T-cell (primary cell): ENCODE measurements at regions of chr3 and their contacts with region 1.

Region 1: GRCh38 chr3:187738331-187739093 is 6.8 kb downstream of the BCL6 start:
- DNase-seq: peak in 32 of 35 experiments; percentile 25 to 85 (median 58)
- ATAC-seq: peak; percentile 41 to 53 (median 48)
- H3K4me3 ChIP-seq: peak overlapping the region; percentile 93 to 97
- H3K4me3 Mint-ChIP-seq: peak overlapping the region; percentile 95 to 98 (median 98)
- H3K27ac ChIP-seq: peak overlapping the region; percentile 98
- H3K27ac Mint-ChIP-seq: peak overlapping the region; percentile 90 to 100
- H3K4me1 ChIP-seq: peaks cover 17 to 60% of the 10 kb centered on the region in 2 experiments
- H3K4me1 Mint-ChIP-seq: peaks cover 51 to 62% (median 53%) of the 10 kb centered on the region in 3 donors
- H3K27me3 ChIP-seq: no peaks in the 10 kb centered on the region
- H3K27me3 Mint-ChIP-seq: no peaks in the 10 kb centered on the region

Region 2: DNA sequence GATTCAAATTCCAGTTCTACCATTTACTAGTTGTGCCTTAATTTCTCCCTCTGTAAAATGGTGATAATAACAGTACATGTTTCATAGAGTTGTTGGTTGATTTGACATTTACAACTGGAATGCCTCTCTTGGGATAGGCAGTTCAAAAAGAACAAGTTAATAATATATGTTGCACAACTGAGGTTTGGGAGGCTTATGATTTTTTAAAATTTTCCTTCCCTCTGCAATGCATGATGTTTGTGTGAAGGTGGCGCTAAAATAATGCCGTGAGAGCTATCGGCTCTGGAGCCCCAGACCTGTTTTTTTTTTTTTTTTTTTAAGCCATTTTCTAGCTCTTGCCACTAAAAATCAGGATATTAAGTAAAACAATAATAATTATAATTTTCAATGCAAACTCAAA is 1149.4 kb before region 1 on chr3:
- CTCF ChIA-PET with region 1: no interaction called
- POLR2A ChIA-PET with region 1: no interaction called
- DNase-seq: no peak
- ATAC-seq: no peak
- H3K4me3 ChIP-seq: no peak overlapping the region
- H3K4me3 Mint-ChIP-seq: no peak overlapping the region
- H3K27ac ChIP-seq: no peak overlapping the region
- H3K27ac Mint-ChIP-seq: no peak overlapping the region
- H3K4me1 ChIP-seq: no peaks in the 10 kb centered on the region
- H3K4me1 Mint-ChIP-seq: peaks cover 8 to 25% (median 23%) of the 10 kb centered on the region in 3 donors
- H3K27me3 ChIP-seq: no peaks in the 10 kb centered on the region
- H3K27me3 Mint-ChIP-seq: no peaks in the 10 kb centered on the region

Region 3: GRCh38 chr3:187979564-187979963 is 241.1 kb after region 1 on chr3:
- CTCF ChIA-PET with region 1: interaction called, 4 to 11 read pairs
- POLR2A ChIA-PET with region 1: interaction called in 1 of 2 experiments, 3 read pairs
- DNase-seq: peak in 33 of 35 experiments; percentile 11 to 66 (median 40)
- ATAC-seq: peak; percentile 75 to 90 (median 84)
- H3K4me3 ChIP-seq: no peak overlapping the region
- H3K4me3 Mint-ChIP-seq: peak overlapping the region in 1 of 3 donors; percentile 66
- H3K27ac ChIP-seq: peak overlapping the region; percentile 40
- H3K27ac Mint-ChIP-seq: peak overlapping the region; percentile 87 to 88
- H3K4me1 ChIP-seq: peaks cover 35 to 41% of the 10 kb centered on the region in 2 experiments
- H3K4me1 Mint-ChIP-seq: peaks cover 54 to 59% (median 58%) of the 10 kb centered on the region in 3 donors
- H3K27me3 ChIP-seq: no peaks in the 10 kb centered on the region
- H3K27me3 Mint-ChIP-seq: no peaks in the 10 kb centered on the region

Region 4: GRCh38 chr3:188740010-188740409 is 1001.5 kb after region 1 on chr3:
- CTCF ChIA-PET with region 1: interaction called, 11 to 111 read pairs
- POLR2A ChIA-PET with region 1: no interaction called
- DNase-seq: no peak
- ATAC-seq: no peak
- H3K4me3 ChIP-seq: no peak overlapping the region
- H3K4me3 Mint-ChIP-seq: no peak overlapping the region
- H3K27ac ChIP-seq: no peak overlapping the region
- H3K27ac Mint-ChIP-seq: no peak overlapping the region
- H3K4me1 ChIP-seq: no peaks in the 10 kb centered on the region
- H3K4me1 Mint-ChIP-seq: no peaks in the 10 kb centered on the region
- H3K27me3 ChIP-seq: no peaks in the 10 kb centered on the region
- H3K27me3 Mint-ChIP-seq: no peaks in the 10 kb centered on the region

Region 5: DNA sequence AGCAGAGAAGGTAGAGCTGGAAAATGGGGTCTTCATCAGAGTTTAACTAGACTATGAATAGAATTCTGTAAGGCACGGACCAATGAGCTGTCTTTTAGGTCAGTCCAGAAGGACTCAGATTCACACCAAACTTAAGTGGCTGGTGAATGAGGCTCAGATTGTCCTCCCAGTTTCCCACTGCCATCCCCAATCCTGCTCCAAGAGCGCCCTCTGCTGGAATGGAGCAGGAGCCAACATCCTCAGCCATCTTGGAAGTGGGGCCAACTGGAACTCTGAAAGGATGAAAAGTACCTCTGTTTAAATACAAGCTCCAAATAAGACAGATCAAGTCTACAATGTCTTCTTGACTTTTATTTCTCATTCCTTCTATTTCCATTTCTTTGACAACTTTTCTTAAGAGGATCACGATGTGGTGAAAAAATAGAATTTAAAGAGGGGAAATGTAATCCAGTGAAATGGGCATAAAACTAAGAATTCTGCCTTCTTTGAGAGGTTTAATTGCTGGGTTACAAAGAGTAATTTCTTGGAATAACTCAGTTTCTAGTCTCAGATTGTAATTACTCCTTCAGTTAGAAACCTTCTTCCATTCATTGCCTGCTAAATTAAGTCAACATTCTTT is 1216.2 kb after region 1 on chr3:
- CTCF ChIA-PET with region 1: interaction called, 165 to 377 read pairs
- POLR2A ChIA-PET with region 1: interaction called in 1 of 2 experiments, 6 read pairs
- DNase-seq: peak; percentile 25 to 84 (median 58)
- ATAC-seq: peak; percentile 64 to 82 (median 76)
- H3K4me3 ChIP-seq: no peak overlapping the region
- H3K4me3 Mint-ChIP-seq: no peak overlapping the region
- H3K27ac ChIP-seq: no peak overlapping the region
- H3K27ac Mint-ChIP-seq: no peak overlapping the region
- H3K4me1 ChIP-seq: no peaks in the 10 kb centered on the region
- H3K4me1 Mint-ChIP-seq: peaks cover 0 to 7% (median 5%) of the 10 kb centered on the region in 3 donors
- H3K27me3 ChIP-seq: no peaks in the 10 kb centered on the region
- H3K27me3 Mint-ChIP-seq: no peaks in the 10 kb centered on the region

Region 6: GRCh38 chr3:189049438-189050236 is 1311.1 kb after region 1 on chr3:
- CTCF ChIA-PET with region 1: interaction called in 1 of 2 experiments, 135 read pairs
- POLR2A ChIA-PET with region 1: interaction called in 1 of 2 experiments, 3 read pairs
- DNase-seq: peak in 11 of 35 experiments; percentile 1 to 31 (median 3)
- ATAC-seq: peak; percentile 36 to 84 (median 71)
- H3K4me3 ChIP-seq: no peak overlapping the region
- H3K4me3 Mint-ChIP-seq: peak overlapping the region; percentile 20 to 49 (median 45)
- H3K27ac ChIP-seq: peak overlapping the region; percentile 54
- H3K27ac Mint-ChIP-seq: peak overlapping the region; percentile 84 to 92
- H3K4me1 ChIP-seq: peaks cover 0 to 8% of the 10 kb centered on the region in 2 experiments
- H3K4me1 Mint-ChIP-seq: peaks cover 14 to 24% (median 24%) of the 10 kb centered on the region in 3 donors
- H3K27me3 ChIP-seq: no peaks in the 10 kb centered on the region
- H3K27me3 Mint-ChIP-seq: peaks cover 7 to 18% of the 10 kb centered on the region in 2 donors

Region 7: GRCh38 chr3:189132231-189132707 is 1393.8 kb after region 1 on chr3:
- CTCF ChIA-PET with region 1: interaction called, 3 to 23 read pairs
- POLR2A ChIA-PET with region 1: interaction called in 1 of 2 experiments, 13 read pairs
- DNase-seq: peak; percentile 45 to 87 (median 66)
- ATAC-seq: peak; percentile 96 to 98 (median 96)
- H3K4me3 ChIP-seq: peak overlapping the region in 1 of 2 donors; percentile 15
- H3K4me3 Mint-ChIP-seq: peak overlapping the region; percentile 35 to 67 (median 58)
- H3K27ac ChIP-seq: peak overlapping the region; percentile 94
- H3K27ac Mint-ChIP-seq: peak overlapping the region; percentile 96 to 100
- H3K4me1 ChIP-seq: peaks cover 14 to 25% of the 10 kb centered on the region in 2 experiments
- H3K4me1 Mint-ChIP-seq: peaks cover 20 to 47% (median 46%) of the 10 kb centered on the region in 3 donors
- H3K27me3 ChIP-seq: no peaks in the 10 kb centered on the region
- H3K27me3 Mint-ChIP-seq: no peaks in the 10 kb centered on the region